Esophagus muscularis mucosa (tissue), 4 donors: ENCODE measurements at regions of chr11 and their contacts with region 1.

Region 1: GRCh38 chr11:116972691-116973090 is 125.5 kb downstream of the SIK3 start:
- DNase-seq: no peak
- H3K4me3 ChIP-seq: no peak overlapping the region
- H3K27ac ChIP-seq: no peak overlapping the region
- H3K4me1 ChIP-seq: peaks cover 0 to 14% (median 13%) of the 10 kb centered on the region in 4 donors
- H3K27me3 ChIP-seq: no peaks in the 10 kb centered on the region
- CTCF ChIP-seq: peak in 1 of 3 experiments; percentile 10
- EP300 ChIP-seq: no peak
- POLR2A ChIP-seq: no peak

Region 2: GRCh38 chr11:116913000-116913399 is 59.7 kb before region 1 on chr11:
- intact Hi-C with region 1: loop called (anchors 10 kb)
- DNase-seq: no peak
- H3K4me3 ChIP-seq: no peak overlapping the region
- H3K27ac ChIP-seq: peak overlapping the region in 2 of 4 donors; percentile 0 to 17
- H3K4me1 ChIP-seq: peaks cover 12 to 43% (median 27%) of the 10 kb centered on the region in 4 donors
- H3K27me3 ChIP-seq: no peaks in the 10 kb centered on the region
- CTCF ChIP-seq: no peak
- EP300 ChIP-seq: no peak
- POLR2A ChIP-seq: no peak